ENCODE measurements at regions of chr11 and their contacts with region 1.

Region 1: GRCh38 chr11:77127232-77127911 is 674 bp upstream of the MYO7A start:
- DNase-seq: peak; percentile 31 to 46 (median 41)
- H3K4me3 ChIP-seq: peak overlapping the region; percentile 12 to 72 (median 31)
- H3K4me3 Mint-ChIP-seq: peak overlapping the region; percentile 67 to 78
- H3K27ac ChIP-seq: no peak overlapping the region
- H3K27ac Mint-ChIP-seq: peak overlapping the region in 1 of 7 donors; percentile 67
- H3K4me1 ChIP-seq: peaks cover 9 to 15% of the 10 kb centered on the region in 2 donors
- H3K4me1 Mint-ChIP-seq: peaks cover 15% of the 10 kb centered on the region
- H3K27me3 ChIP-seq: peaks cover 0 to 13% of the 10 kb centered on the region in 2 donors
- H3K27me3 Mint-ChIP-seq: peaks cover 13 to 19% (median 14%) of the 10 kb centered on the region in 3 donors
- CTCF ChIP-seq: peak; percentile 99

Region 2: GRCh38 chr11:77187776-77188632 is 60.6 kb after region 1 on chr11:
- intact Hi-C with region 1: loop called (anchors 1 to 2 kb)
- DNase-seq: peak; percentile 63 to 75 (median 71)
- H3K4me3 ChIP-seq: no peak overlapping the region
- H3K4me3 Mint-ChIP-seq: no peak overlapping the region
- H3K27ac ChIP-seq: no peak overlapping the region
- H3K27ac Mint-ChIP-seq: peak overlapping the region in 1 of 7 donors; percentile 1
- H3K4me1 ChIP-seq: no peaks in the 10 kb centered on the region
- H3K4me1 Mint-ChIP-seq: peaks cover 7% of the 10 kb centered on the region
- H3K27me3 ChIP-seq: no peaks in the 10 kb centered on the region
- H3K27me3 Mint-ChIP-seq: peaks cover 0 to 6% (median 0%) of the 10 kb centered on the region in 3 donors
- CTCF ChIP-seq: peak; percentile 93

Region 3: DNA sequence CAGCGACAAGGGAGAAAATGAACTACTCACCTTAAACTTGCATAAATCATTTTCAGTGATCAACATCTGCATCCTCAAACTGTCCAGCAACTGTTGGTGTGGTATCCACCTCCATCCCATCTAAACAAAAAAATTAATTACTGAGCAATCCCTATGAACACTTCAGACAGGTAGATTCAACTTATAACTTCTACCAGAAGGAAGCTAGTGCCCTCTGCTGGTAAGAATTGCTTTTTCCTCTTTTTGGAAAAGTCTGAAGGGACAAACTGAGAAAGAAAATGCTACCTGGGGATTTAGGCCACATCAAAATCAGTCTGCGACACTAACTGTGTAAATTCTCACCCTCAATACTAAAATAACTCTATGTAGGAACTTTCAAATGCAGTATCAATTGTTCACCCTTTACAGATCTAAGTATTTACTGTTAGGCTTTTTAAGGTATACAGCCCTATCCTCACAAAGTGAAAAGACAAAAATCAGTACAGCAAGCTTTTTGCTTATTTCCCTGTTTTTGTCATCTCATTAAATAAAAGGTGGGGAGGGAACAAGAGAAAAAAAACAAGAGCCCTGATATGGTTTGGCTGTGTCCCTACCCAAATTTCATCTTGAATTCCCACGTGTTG is 492.3 kb after region 1 on chr11:
- intact Hi-C with region 1: loop called in 1 of 2 experiments (anchors 10 kb)
- DNase-seq: peak in 2 of 3 donors; percentile 15 to 50
- H3K4me3 ChIP-seq: no peak overlapping the region
- H3K4me3 Mint-ChIP-seq: no peak overlapping the region
- H3K27ac ChIP-seq: no peak overlapping the region
- H3K27ac Mint-ChIP-seq: no peak overlapping the region
- H3K4me1 ChIP-seq: no peaks in the 10 kb centered on the region
- H3K4me1 Mint-ChIP-seq: no peaks in the 10 kb centered on the region
- H3K27me3 ChIP-seq: no peaks in the 10 kb centered on the region
- H3K27me3 Mint-ChIP-seq: peaks cover 0 to 2% (median 0%) of the 10 kb centered on the region in 3 donors
- CTCF ChIP-seq: peak; percentile 86

Measured in CD14-positive monocyte (primary cell).